Right cardiac atrium (tissue), 5 donors: ENCODE measurements at regions of chr20 and their contacts with region 1.

Region 1: DNA sequence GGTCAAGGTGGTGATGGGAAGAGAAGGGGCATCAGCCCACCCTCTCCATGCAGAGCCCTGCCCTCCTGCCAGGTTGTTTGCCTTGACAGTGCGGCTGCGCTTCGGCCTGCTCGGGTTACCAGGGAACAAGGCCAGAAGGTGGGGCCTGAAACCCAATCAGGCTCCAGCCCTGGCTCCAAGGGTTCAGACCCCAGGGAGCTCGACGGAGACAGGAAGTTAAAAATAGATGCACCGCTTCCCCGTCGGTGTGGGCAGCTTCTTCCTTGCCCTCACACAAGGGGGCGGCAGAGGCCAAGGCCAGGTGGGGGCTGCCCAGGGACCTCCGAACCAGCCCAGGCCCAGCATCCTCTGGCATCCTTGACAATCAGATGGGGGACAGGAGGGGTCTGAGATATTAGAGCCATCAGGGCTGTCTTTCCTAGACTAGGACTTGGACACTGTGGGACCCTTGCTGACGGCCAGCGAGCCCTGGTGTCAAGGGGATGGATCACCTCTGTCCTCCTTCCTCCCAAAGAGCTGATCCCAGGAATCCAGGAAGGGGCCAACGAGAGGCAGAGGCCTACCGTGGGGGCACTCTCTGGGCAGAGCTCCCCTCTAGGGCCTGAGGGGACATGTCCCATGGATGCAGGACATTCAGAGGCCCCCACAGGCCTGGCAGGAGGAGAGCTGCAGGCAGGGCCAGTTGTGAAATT is 65.2 kb downstream of the RIPOR3 start:
- DNase-seq: peak; percentile 64 to 83 (median 75)
- ATAC-seq: peak; percentile 59
- H3K4me3 ChIP-seq: no peak overlapping the region
- H3K27ac ChIP-seq: no peak overlapping the region
- H3K4me1 ChIP-seq: peaks cover 2% of the 10 kb centered on the region
- H3K27me3 ChIP-seq: no peaks in the 10 kb centered on the region

Region 2: GRCh38 chr20:50425085-50425484 is 201.0 kb before region 1 on chr20:
- intact Hi-C with region 1: no loop called
- DNase-seq: no peak
- ATAC-seq: no peak
- H3K4me3 ChIP-seq: no peak overlapping the region
- H3K27ac ChIP-seq: no peak overlapping the region
- H3K4me1 ChIP-seq: peaks cover 10% of the 10 kb centered on the region
- H3K27me3 ChIP-seq: no peaks in the 10 kb centered on the region

Region 3: DNA sequence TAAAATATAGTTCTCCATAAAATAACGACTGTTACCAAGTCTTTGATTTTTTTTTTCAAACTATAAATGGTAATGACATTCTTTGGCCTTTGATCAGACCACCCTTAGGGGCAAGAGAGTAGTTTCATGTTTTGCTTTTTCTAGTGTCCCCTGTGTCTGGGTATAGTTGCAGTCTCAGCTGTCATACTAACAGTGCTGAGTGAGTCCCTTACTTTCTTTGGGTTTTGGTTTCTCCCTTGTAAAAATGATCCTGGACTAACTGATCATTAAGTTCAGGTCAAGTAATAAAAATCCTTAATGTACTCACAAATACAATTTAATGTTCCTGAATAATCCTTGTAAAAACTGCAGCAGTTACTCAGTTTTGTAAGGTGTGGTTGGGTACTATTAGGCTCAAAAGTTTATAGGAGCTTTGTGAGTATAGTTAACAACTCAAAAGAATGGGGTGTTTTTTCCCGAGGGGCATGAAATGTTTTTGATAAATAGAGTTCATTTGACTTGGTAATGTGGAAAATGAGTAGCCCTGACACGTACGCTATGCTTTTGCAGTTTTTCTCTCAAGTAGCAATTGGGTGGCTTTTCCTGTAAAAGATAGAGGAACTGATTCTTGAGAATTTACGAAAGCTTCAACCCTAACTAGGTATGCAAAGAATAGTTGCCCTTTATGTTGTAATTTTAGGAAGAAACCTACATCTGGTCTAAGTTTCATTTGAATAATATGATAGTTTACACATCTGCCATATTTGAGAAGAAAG is 109.8 kb before region 1 on chr20:
- intact Hi-C with region 1: no loop called
- DNase-seq: no peak
- ATAC-seq: no peak
- H3K4me3 ChIP-seq: no peak overlapping the region
- H3K27ac ChIP-seq: no peak overlapping the region
- H3K4me1 ChIP-seq: peaks cover 8% of the 10 kb centered on the region
- H3K27me3 ChIP-seq: no peaks in the 10 kb centered on the region

Region 4: DNA sequence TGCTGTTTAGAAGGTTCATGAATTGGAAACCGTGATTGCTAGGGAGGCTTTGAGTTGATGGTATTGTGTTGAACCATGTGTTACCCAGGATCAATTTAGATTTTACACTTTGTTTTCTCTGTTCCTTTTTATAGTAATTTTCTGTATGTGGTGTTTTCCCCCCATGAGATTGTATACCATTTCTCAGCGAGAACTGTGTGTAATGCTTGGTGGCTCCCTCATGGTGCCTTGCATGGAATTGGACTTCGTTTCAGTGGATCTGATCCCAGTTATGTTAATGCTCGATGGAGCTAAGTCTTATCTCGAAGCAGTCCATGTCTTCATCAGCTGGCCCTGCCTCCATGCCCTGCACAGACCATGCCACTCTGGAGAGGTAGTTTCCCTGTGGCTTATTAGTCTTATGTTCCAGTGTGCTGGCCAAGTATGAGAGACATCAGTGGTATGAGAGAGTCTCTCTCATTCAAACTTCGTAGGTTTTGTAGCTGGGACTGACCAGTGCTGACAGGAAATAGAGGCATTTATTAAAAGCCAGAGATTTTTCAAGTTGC is 97.3 kb before region 1 on chr20:
- intact Hi-C with region 1: no loop called
- DNase-seq: no peak
- ATAC-seq: peak; percentile 27 to 52
- H3K4me3 ChIP-seq: no peak overlapping the region
- H3K27ac ChIP-seq: peak overlapping the region; percentile 3
- H3K4me1 ChIP-seq: peaks cover 20% of the 10 kb centered on the region
- H3K27me3 ChIP-seq: no peaks in the 10 kb centered on the region

Region 5: GRCh38 chr20:50704980-50705379 is 78.8 kb after region 1 on chr20:
- intact Hi-C with region 1: loop called in 2 of 4 experiments (anchors 10 kb)
- DNase-seq: no peak
- ATAC-seq: no peak
- H3K4me3 ChIP-seq: no peak overlapping the region
- H3K27ac ChIP-seq: no peak overlapping the region
- H3K4me1 ChIP-seq: no peaks in the 10 kb centered on the region
- H3K27me3 ChIP-seq: no peaks in the 10 kb centered on the region

Region 6: DNA sequence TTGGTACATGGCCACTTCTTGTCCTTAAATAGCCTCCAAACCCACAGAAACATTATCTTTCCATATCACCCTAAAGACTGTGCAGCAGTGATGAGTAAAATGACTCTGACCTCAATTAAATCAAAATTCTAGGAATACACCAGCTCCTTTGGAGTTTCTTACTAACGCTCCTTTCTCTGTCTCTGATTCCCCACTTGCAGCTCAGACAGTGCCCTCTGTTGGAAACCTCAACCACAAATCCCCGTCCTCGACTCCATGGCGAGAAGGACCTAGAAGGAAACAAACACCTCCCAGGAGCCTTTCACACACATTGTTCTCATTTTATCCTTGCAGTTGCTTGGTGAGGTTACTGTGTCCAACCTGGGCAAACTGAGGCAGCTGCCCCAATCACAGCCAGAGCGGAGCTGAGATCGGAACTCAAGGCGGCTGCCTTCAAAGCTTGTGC is 87.5 kb after region 1 on chr20:
- intact Hi-C with region 1: loop called in 2 of 4 experiments (anchors 10 kb)
- DNase-seq: no peak
- ATAC-seq: peak; percentile 55 to 57
- H3K4me3 ChIP-seq: no peak overlapping the region
- H3K27ac ChIP-seq: no peak overlapping the region
- H3K4me1 ChIP-seq: no peaks in the 10 kb centered on the region
- H3K27me3 ChIP-seq: no peaks in the 10 kb centered on the region

Region 7: GRCh38 chr20:50744143-50744792 is 118.1 kb after region 1 on chr20:
- intact Hi-C with region 1: loop called in 2 of 4 experiments (anchors 10 kb)
- DNase-seq: peak; percentile 59 to 85 (median 76)
- ATAC-seq: peak; percentile 90 to 91
- H3K4me3 ChIP-seq: no peak overlapping the region
- H3K27ac ChIP-seq: peak overlapping the region; percentile 98
- H3K4me1 ChIP-seq: no peaks in the 10 kb centered on the region
- H3K27me3 ChIP-seq: no peaks in the 10 kb centered on the region